IMR-90 (cell line): ENCODE measurements at regions of chr4 and their contacts with region 1.

Region 1: DNA sequence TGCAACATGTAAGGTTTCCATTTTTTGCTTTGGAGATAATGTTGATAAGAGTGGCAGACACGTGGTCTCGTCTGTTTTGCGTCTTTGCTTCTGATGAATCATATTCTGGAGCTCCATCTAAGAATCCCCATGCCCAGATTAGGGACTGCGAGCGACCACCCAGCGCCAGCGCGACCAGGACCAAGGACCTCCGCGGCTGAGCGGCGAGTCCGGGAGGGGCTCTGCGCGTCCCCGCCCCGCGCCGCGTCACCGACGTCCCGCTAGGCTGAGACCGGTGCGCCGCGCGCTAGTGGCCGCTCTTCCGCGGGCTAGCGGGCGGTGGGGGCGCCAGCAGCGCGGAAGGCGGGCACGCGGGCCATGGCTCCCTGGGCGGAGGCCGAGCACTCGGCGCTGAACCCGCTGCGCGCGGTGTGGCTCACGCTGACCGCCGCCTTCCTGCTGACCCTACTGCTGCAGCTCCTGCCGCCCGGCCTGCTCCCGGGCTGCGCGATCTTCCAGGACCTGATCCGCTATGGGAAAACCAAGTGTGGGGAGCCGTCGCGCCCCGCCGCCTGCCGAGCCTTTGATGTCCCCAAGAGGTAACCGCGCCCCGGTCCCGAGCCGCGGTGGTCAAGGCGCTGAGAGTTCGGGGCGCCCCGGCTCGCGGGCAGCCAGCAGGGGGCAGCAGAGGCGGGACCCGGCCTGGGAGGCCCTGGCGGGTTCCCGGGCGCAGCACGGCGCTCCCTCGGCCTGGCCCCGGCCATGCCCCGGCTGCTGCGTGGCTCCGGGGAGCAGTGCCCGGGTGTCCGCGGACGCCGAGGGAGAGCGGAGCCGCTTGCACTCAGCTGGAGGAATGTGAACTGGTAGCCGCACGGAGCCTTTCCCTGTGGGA is at the start of gene SRD5A3:
- DNase-seq: peak; percentile 71
- ATAC-seq: peak; percentile 95
- H3K4me3 ChIP-seq: peak within 1 kb of the TSS; percentile 64
- H3K27ac ChIP-seq: peak within 1 kb of the TSS; percentile 79
- H3K4me1 ChIP-seq: peaks cover 14% of the 10 kb centered on the region
- H3K27me3 ChIP-seq: no peaks in the 10 kb centered on the region
- CTCF ChIP-seq: peak; percentile 84
- POLR2A ChIP-seq: peak; percentile 72
- RAD21 ChIP-seq: peak; percentile 80
- total RNA-seq, gene SRD5A3: 6.8 and 7.8 TPM in 2 replicates

Region 2: DNA sequence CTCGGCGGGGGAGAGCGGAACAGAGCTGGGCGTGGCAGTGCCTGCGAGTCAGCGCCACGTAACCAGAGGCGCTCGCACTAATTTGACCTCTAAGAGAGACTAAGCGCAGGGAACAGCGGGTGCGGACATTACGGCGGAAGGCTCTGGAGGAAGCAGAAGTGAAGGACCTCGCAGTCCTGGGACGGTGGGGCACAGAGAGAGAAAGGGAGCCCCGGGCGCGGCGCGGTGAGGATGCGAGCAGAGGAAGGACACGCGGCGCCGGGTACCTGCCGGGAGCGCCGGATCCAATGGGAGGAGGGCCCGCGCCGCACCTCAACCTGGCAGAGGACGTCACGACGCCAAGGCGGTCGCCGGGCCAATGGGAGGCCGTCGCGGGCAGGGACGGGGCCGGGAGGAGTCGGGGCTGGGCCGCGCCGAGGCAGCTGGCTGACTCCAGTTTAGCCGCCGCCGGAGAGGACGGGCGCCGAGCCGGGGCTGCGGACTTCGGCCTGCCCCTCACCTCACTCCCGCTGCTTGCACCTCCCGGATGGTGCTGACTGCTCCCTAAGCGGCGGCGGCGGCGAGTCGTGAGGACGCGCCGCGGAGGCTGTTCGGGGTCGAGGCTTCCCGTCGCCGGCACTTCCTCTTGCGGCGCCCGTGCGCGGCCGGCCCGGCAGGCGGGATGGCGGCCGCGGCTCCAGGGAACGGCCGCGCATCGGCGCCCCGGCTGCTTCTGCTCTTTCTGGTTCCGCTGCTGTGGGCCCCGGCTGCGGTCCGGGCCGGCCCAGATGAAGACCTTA is 49.5 kb after region 1 on chr4 and contains the start of gene TMEM165:
- CTCF ChIA-PET with region 1: interaction called, 6 read pairs
- POLR2A ChIA-PET with region 1: interaction called, 4 read pairs
- dilution Hi-C with region 1: no loop called
- in situ Hi-C with region 1: no loop called
- intact Hi-C with region 1: loop called (anchors 1 kb)
- DNase-seq: peak; percentile 79
- ATAC-seq: peak; percentile 92
- H3K4me3 ChIP-seq: peak within 1 kb of the TSS; percentile 99
- H3K27ac ChIP-seq: peak within 1 kb of the TSS; percentile 99
- H3K4me1 ChIP-seq: peaks cover 7% of the 10 kb centered on the region
- H3K27me3 ChIP-seq: no peaks in the 10 kb centered on the region
- CTCF ChIP-seq: no peak
- POLR2A ChIP-seq: peak; percentile 96
- RAD21 ChIP-seq: no peak; the same call in 1 of the 2 replicates
- total RNA-seq, gene TMEM165: 49.6 and 88.3 TPM in 2 replicates

Region 3: GRCh38 chr4:55546756-55547465 is 200.7 kb after region 1 on chr4 and contains the start of gene CLOCK:
- CTCF ChIA-PET with region 1: interaction called, 3 read pairs
- POLR2A ChIA-PET with region 1: interaction called, 4 read pairs
- dilution Hi-C with region 1: no loop called
- in situ Hi-C with region 1: loop called (anchors 5 kb)
- intact Hi-C with region 1: loop called (anchors 2 kb)
- DNase-seq: peak; percentile 85
- ATAC-seq: peak; percentile 82
- H3K4me3 ChIP-seq: peak within 1 kb of the TSS; percentile 62
- H3K27ac ChIP-seq: peak within 1 kb of the TSS; percentile 75
- H3K4me1 ChIP-seq: peaks cover 5% of the 10 kb centered on the region; the same call in 1 of the 2 replicates
- H3K27me3 ChIP-seq: no peaks in the 10 kb centered on the region
- CTCF ChIP-seq: peak; percentile 44
- POLR2A ChIP-seq: peak; percentile 54
- RAD21 ChIP-seq: no peak; the same call in 1 of the 2 replicates
- total RNA-seq, gene CLOCK: 51.4 and 53.4 TPM in 2 replicates

Region 4: DNA sequence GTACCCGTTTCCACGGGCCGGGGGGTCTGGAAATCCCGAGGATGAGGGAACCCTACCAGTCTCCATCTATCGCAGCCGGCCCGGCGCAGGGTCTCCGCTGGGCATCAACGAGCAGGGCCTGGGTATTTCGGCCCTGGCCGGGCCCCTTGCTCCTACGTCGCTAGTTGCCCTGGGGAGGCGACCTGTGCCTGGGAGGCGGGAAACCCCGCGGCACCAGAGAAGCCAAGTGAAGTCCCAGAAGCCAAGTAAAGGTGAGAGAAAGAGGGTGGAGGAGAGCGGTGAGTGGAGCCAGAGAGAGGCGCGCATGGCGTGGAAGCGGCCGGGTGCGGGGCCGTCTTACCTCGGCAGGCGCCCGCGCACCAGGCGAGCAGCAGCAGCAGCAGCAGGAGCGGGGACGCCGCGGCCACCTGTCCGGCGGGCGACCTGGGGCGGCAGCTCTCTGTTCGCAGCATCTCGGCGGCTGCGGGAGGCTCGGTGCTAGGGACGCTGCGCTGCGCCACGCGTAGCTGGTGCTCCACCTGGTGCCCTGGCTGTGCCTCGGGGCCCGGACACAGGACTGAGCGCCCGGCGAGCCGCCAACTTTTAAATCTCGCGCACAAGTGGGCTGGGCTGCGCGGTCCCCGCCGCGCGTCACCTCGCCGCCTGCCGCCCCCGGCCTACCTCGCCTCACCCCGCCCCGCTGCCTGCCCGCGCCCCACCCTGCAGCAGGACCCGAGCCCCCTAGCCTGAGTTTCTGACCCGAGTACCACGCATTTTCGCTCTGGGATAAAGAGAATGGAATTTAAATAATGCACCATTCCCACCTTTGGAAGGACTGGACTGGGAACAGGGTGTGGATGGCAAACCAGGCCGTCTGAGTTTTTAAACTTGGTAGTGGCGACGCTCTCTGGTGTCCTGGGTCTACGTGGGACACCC is 289.8 kb after region 1 on chr4 and contains the start of gene NMU:
- CTCF ChIA-PET with region 1: no interaction called
- POLR2A ChIA-PET with region 1: no interaction called
- dilution Hi-C with region 1: no loop called
- in situ Hi-C with region 1: no loop called
- intact Hi-C with region 1: loop called (anchors 5 kb)
- DNase-seq: no peak
- ATAC-seq: peak; percentile 44; the same call in 1 of the 2 replicates
- H3K4me3 ChIP-seq: no peak within 1 kb of the TSS
- H3K27ac ChIP-seq: no peak within 1 kb of the TSS
- H3K4me1 ChIP-seq: no peaks in the 10 kb centered on the region; the same call in 1 of the 2 replicates
- H3K27me3 ChIP-seq: peaks cover 33% of the 10 kb centered on the region
- CTCF ChIP-seq: no peak
- POLR2A ChIP-seq: no peak
- RAD21 ChIP-seq: no peak
- total RNA-seq, gene NMU: not detected in 2 replicates

Region 5: GRCh38 chr4:55853484-55854046 is 507.4 kb after region 1 on chr4 and contains the start of gene EXOC1:
- CTCF ChIA-PET with region 1: no interaction called
- POLR2A ChIA-PET with region 1: no interaction called
- dilution Hi-C with region 1: no loop called
- in situ Hi-C with region 1: loop called (anchors 10 kb)
- intact Hi-C with region 1: loop called (anchors 5 kb)
- DNase-seq: peak; percentile 94
- ATAC-seq: peak; percentile 100
- H3K4me3 ChIP-seq: peak within 1 kb of the TSS; percentile 89
- H3K27ac ChIP-seq: peak within 1 kb of the TSS; percentile 78
- H3K4me1 ChIP-seq: no peaks in the 10 kb centered on the region
- H3K27me3 ChIP-seq: 0 out of 2 replicates have a peak, but pooled peaks cover 2% of the 10 kb centered on the region
- CTCF ChIP-seq: no peak
- POLR2A ChIP-seq: peak; percentile 76; the same call in 1 of the 2 replicates
- RAD21 ChIP-seq: no peak
- total RNA-seq, gene EXOC1: 47.5 and 49.5 TPM in 2 replicates

Region 6: GRCh38 chr4:56301181-56302076 is 955.2 kb after region 1 on chr4:
- CTCF ChIA-PET with region 1: no interaction called
- POLR2A ChIA-PET with region 1: no interaction called
- dilution Hi-C with region 1: no loop called
- in situ Hi-C with region 1: no loop called
- intact Hi-C with region 1: loop called (anchors 5 kb)
- DNase-seq: peak; percentile 86
- ATAC-seq: peak; percentile 97
- H3K4me3 ChIP-seq: no peak overlapping the region
- H3K27ac ChIP-seq: no peak overlapping the region
- H3K4me1 ChIP-seq: no peaks in the 10 kb centered on the region
- H3K27me3 ChIP-seq: no peaks in the 10 kb centered on the region; the same call in 1 of the 2 replicates
- CTCF ChIP-seq: peak; percentile 87
- POLR2A ChIP-seq: no peak
- RAD21 ChIP-seq: peak; percentile 93